ENCODE measurements at regions of chr17 and their contacts with region 1.

Region 1: GRCh38 chr17:45197555-45198334 is 23.9 kb upstream of the FMNL1 start:
- DNase-seq: peak; percentile 88
- ATAC-seq: peak; percentile 100
- H3K4me3 Mint-ChIP-seq: no peak overlapping the region
- H3K27ac Mint-ChIP-seq: no peak overlapping the region
- H3K4me1 Mint-ChIP-seq: peaks cover 5% of the 10 kb centered on the region
- H3K27me3 Mint-ChIP-seq: no peaks in the 10 kb centered on the region

Region 2: DNA sequence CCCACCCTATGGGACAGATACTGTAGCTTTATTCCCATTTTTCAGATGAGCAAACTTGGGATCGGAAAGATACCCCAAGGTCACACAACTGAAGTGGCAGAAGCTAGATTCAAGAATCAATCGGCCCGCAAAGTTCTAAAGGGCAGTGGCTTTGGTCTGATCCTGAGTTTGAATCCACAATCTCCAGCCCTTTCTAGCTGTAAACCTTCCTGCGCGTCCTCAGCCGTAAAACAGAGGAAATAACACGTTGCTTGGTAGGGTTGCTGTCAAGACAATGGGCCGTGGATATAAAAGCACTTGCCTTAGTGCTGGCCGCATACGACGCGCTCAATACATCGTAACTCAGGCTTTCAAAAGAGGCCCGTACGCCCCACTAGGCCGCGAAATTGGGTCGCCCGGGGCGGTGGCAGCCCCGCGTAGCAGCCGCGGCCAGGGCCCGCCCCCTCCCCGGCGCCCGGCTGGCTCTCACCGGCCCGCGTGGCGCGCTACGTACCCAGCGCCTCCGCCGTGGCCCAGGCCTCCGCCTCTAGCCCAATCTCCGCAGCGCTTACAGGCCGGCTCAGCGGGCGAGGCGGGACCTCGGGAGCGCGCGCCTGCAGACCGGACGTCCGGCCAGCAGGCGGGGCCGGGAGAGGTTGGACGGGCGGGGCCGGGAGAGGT is 146.6 kb before region 1 on chr17 and contains the start of gene DCAKD:
- CTCF ChIA-PET with region 1: no interaction called
- POLR2A ChIA-PET with region 1: no interaction called
- DNase-seq: peak; percentile 94
- ATAC-seq: peak; percentile 98
- H3K4me3 Mint-ChIP-seq: peak within 1 kb of the TSS; percentile 97
- H3K27ac Mint-ChIP-seq: peak within 1 kb of the TSS; percentile 97
- H3K4me1 Mint-ChIP-seq: peaks cover 48% of the 10 kb centered on the region
- H3K27me3 Mint-ChIP-seq: no peaks in the 10 kb centered on the region
- total RNA-seq, gene DCAKD: 32.9 to 33.7 TPM

Region 3: DNA sequence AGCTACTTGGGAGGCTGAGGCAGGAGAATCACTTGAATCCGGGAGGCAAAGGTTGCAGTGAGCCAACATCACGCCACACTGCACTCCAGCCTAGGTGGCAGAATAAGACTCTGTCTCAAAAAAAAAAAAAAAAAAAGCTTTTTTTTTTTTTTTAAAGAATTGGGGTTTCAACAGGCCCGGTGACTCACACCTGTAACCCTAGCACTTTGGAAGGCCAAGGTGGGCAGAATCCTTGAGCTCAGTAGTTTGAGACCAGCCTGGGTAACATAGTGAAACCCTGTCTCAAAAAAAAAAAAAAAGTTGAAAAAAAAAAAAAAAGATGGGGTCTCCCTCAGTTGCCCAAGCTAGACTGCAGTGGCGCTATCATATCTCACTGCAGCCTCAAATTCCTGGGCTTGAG is 42.7 kb before region 1 on chr17:
- CTCF ChIA-PET with region 1: interaction called, 160 read pairs
- POLR2A ChIA-PET with region 1: interaction called, 38 read pairs
- DNase-seq: no peak
- ATAC-seq: no peak
- H3K4me3 Mint-ChIP-seq: no peak overlapping the region
- H3K27ac Mint-ChIP-seq: no peak overlapping the region
- H3K4me1 Mint-ChIP-seq: peaks cover 42% of the 10 kb centered on the region
- H3K27me3 Mint-ChIP-seq: no peaks in the 10 kb centered on the region

Region 4: DNA sequence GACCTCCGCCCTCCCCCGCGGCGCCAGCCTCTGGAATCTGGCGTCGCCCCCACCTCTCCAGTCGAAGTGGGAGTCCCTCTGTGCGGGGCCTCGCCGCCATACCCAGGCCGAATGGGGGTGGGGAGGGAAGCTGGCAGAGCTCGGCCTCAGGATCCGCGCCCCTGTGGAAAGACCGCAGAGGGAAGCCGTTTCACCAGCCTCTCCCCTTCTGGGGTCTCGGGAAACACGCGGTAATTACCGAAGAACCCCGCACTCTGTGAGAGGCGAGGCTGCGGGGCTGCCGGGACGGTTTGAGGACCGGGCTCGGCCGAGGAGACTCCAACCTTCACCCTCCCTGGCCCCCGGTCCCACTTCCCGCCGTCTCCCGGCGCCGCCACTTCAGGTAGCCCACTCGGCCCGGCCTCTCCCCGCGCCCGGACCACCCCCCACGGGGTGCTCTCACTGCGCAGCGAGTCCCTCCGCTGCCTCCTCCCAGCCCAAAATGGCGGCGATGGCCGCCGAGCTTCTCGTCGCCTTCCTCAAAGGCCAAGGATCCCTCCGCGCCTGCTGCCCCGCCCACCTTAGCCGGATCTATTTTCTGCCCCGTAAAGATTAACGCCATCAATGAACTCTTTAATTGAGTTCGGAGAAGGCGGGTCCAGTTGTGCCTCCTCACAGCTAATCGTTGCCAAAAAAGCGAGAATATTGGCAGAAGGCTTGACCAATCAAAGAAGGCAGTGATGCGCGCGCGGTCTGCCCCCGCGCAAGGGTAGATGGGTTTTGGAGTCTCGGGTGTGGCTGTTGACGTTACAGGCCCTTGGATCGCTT is 36.5 kb before region 1 on chr17:
- CTCF ChIA-PET with region 1: interaction called, 37 read pairs
- POLR2A ChIA-PET with region 1: interaction called, 3 read pairs
- DNase-seq: peak; percentile 99
- ATAC-seq: peak; percentile 98
- H3K4me3 Mint-ChIP-seq: peak overlapping the region; percentile 99
- H3K27ac Mint-ChIP-seq: peak overlapping the region; percentile 98
- H3K4me1 Mint-ChIP-seq: peaks cover 43% of the 10 kb centered on the region
- H3K27me3 Mint-ChIP-seq: no peaks in the 10 kb centered on the region

Region 5: GRCh38 chr17:45172454-45173286 is 25.1 kb before region 1 on chr17:
- CTCF ChIA-PET with region 1: interaction called, 38 read pairs
- POLR2A ChIA-PET with region 1: interaction called, 4 read pairs
- DNase-seq: peak; percentile 68
- ATAC-seq: peak; percentile 79
- H3K4me3 Mint-ChIP-seq: peak overlapping the region; percentile 65
- H3K27ac Mint-ChIP-seq: peak overlapping the region; percentile 96
- H3K4me1 Mint-ChIP-seq: peaks cover 23% of the 10 kb centered on the region
- H3K27me3 Mint-ChIP-seq: no peaks in the 10 kb centered on the region

Region 6: DNA sequence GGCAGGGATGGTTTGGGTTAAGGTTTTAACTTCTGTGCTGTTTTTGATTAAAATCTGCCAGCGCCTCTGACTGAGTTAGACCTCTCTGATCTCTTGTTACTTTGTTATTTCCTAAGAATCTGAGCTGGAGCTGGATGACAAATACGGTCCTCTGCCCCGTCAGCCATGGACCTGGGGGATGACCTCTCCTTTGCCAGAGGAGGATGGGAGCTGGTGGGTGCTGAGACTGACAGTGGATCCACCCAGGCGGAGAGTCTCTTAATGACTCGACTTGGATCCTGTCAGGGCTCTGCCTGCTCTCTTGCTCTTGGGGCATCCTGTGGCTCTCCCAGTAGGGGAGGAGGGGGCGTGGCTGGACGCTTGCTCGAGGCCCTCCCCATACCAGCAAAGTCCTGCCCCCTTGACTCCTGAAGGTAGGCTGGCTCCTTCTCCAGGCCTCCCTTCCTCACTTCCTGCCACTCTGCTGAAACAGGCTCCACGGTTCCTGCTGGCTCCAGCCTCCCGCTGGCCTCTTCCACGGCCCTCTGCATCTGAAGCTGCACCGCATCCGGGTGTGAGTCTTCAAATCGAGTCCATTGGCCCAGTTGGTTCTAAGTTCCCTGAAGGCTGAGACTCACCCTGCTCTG is 143.9 kb after region 1 on chr17:
- CTCF ChIA-PET with region 1: no interaction called
- POLR2A ChIA-PET with region 1: no interaction called
- DNase-seq: no peak
- ATAC-seq: no peak
- H3K4me3 Mint-ChIP-seq: no peak overlapping the region
- H3K27ac Mint-ChIP-seq: peak overlapping the region; percentile 13
- H3K4me1 Mint-ChIP-seq: peaks cover 5% of the 10 kb centered on the region
- H3K27me3 Mint-ChIP-seq: no peaks in the 10 kb centered on the region

Measured in activated CD8-positive, alpha-beta T cell treated with anti-CD3 and anti-CD28 coated beads, Interleukin-2, amount 10 ng/mL, durations not matched to agents 7 days and 5 days (primary cell).